ENCODE measurements at regions of chr1 and their contacts with region 1.

Region 1: GRCh38 chr1:23743287-23744052 is at the start of gene ELOA:
- DNase-seq: peak; percentile 56 to 73
- H3K4me3 ChIP-seq: peak within 1 kb of the TSS; percentile 92
- H3K4me3 Mint-ChIP-seq: peak within 1 kb of the TSS; percentile 82
- H3K27ac Mint-ChIP-seq: peak within 1 kb of the TSS; percentile 80
- H3K4me1 ChIP-seq: no peaks in the 10 kb centered on the region
- H3K4me1 Mint-ChIP-seq: no peaks in the 10 kb centered on the region
- H3K27me3 ChIP-seq: no peaks in the 10 kb centered on the region
- H3K27me3 Mint-ChIP-seq: no peaks in the 10 kb centered on the region
- CTCF ChIP-seq: no peak
- total RNA-seq, gene ELOA: 29.4 and 31.3 TPM in 2 replicates

Region 2: GRCh38 chr1:23539698-23540266 is 203.7 kb before region 1 on chr1:
- CTCF ChIA-PET with region 1: no interaction called
- POLR2A ChIA-PET with region 1: no interaction called
- intact Hi-C with region 1: loop called (anchors 2 kb)
- DNase-seq: peak; percentile 92
- H3K4me3 ChIP-seq: no peak overlapping the region
- H3K4me3 Mint-ChIP-seq: peak overlapping the region; percentile 44
- H3K27ac Mint-ChIP-seq: no peak overlapping the region
- H3K4me1 ChIP-seq: no peaks in the 10 kb centered on the region
- H3K4me1 Mint-ChIP-seq: no peaks in the 10 kb centered on the region
- H3K27me3 ChIP-seq: no peaks in the 10 kb centered on the region
- H3K27me3 Mint-ChIP-seq: no peaks in the 10 kb centered on the region
- CTCF ChIP-seq: peak; percentile 76 to 86

Region 3: GRCh38 chr1:23704834-23705495 is 38.5 kb before region 1 on chr1:
- CTCF ChIA-PET with region 1: no interaction called
- POLR2A ChIA-PET with region 1: no interaction called
- intact Hi-C with region 1: loop called (anchors 5 kb)
- DNase-seq: peak in 1 of 2 experiments; percentile 49
- H3K4me3 ChIP-seq: no peak overlapping the region
- H3K4me3 Mint-ChIP-seq: peak overlapping the region; percentile 33
- H3K27ac Mint-ChIP-seq: peak overlapping the region; percentile 79
- H3K4me1 ChIP-seq: peaks cover 17% of the 10 kb centered on the region
- H3K4me1 Mint-ChIP-seq: peaks cover 7% of the 10 kb centered on the region
- H3K27me3 ChIP-seq: no peaks in the 10 kb centered on the region
- H3K27me3 Mint-ChIP-seq: no peaks in the 10 kb centered on the region
- CTCF ChIP-seq: no peak

Measured in Caco-2 (cell line).